ENCODE measurements at regions of chr2 and their contacts with region 1.

Region 1: DNA sequence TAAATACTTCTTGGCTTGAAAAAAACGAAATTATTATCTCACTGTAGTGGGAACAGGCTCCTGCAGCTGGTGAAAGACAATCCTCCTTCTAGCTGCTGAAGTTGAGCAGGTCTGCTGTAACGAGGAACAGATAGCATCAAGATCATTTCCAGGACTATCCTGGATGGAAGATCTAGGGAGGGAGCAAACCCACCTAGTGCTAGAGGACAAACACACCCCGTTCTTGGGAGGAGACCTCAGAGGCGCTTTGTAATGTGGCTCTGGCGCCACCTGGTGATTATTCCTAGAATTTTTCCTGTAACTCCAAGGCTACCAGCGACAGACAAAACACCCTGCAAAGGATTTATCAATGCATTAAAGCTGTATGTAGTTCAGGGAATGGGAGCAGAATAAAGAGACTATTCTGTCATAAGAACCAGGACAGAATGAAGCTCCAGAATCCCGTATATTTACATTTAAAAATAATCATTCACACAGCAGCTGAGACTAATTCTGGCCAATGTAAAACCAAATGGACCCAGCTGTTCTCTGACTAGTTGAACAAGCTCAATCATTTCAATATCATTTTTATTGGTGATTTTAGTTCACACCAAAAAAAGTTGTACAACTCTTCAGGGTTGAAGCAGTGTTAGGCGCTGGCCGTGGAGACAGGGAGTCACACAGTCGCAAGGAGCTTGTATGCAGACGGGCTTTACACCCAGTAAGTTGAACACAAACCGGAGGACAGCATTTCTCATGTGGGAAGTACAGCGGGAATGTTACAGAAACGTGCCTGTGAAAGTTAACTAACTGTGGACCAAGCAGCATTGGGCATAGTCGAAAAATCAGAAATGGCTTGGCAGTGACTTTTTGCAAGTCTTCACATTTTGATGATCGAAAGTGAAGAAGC is 290.3 kb downstream of the TRIB2 start:
- DNase-seq: peak; percentile 23
- H3K4me3 ChIP-seq: peak overlapping the region; percentile 53
- H3K27ac ChIP-seq: peak overlapping the region; percentile 62
- H3K4me1 ChIP-seq: peaks cover 34% of the 10 kb centered on the region
- H3K27me3 ChIP-seq: no peaks in the 10 kb centered on the region
- CTCF ChIP-seq: peak; percentile 95

Region 2: GRCh38 chr2:11829947-11830707 is 1176.9 kb before region 1 on chr2:
- intact Hi-C with region 1: loop called (anchors 10 kb)
- DNase-seq: peak; percentile 53
- H3K4me3 ChIP-seq: peak overlapping the region; percentile 43
- H3K27ac ChIP-seq: peak overlapping the region; percentile 80
- H3K4me1 ChIP-seq: peaks cover 26% of the 10 kb centered on the region
- H3K27me3 ChIP-seq: no peaks in the 10 kb centered on the region
- CTCF ChIP-seq: peak; percentile 47

Region 3: DNA sequence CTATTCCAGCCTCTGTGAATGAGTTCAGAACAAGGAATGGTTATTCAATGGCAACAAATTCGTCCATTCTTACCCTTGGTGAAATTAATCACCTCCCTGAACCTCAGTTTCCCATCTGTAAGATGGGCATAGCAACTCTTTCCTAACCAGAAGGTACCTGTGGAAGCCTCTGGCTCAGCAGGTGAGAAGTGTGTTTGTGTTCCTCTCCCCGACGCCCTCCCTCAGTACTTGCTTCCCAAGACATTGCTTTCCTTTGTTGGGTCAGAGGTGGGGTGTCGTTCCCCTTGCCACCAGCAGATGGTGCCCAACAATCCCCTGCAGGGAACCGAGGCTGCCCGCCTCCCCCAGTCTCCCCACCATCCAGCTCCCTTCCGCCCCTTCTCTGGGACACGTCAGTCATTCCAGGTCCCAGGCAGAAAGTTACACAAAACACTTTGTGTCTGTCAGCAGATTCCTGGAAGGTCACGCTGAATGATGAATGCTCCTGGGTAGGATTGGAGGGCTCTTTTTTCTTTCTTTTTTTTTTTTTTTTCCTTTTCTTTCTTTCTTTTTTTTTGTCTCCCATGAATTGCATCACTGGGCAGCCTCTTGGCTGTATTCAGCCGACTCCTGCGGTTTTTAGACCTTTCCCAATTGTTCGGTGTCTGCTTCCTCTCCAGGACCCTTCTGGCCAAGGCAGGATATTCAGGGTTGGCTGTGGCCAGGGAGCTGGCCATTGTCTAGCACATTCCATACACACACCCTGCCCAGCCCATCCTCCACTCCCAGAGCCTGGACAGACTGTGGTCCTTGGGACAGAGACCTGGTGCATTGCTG is 1143.4 kb before region 1 on chr2:
- intact Hi-C with region 1: loop called (anchors 10 kb)
- DNase-seq: peak; percentile 81
- H3K4me3 ChIP-seq: peak overlapping the region; percentile 32
- H3K27ac ChIP-seq: peak overlapping the region; percentile 65
- H3K4me1 ChIP-seq: peaks cover 16% of the 10 kb centered on the region
- H3K27me3 ChIP-seq: no peaks in the 10 kb centered on the region
- CTCF ChIP-seq: peak; percentile 97

Region 4: GRCh38 chr2:12931186-12931844 is 75.8 kb before region 1 on chr2:
- intact Hi-C with region 1: loop called (anchors 10 kb)
- DNase-seq: no peak
- H3K4me3 ChIP-seq: no peak overlapping the region
- H3K27ac ChIP-seq: peak overlapping the region; percentile 46
- H3K4me1 ChIP-seq: peaks cover 49% of the 10 kb centered on the region
- H3K27me3 ChIP-seq: no peaks in the 10 kb centered on the region
- CTCF ChIP-seq: peak; percentile 95